ENCODE measurements at regions of chr4 and their contacts with region 1.

Region 1: DNA sequence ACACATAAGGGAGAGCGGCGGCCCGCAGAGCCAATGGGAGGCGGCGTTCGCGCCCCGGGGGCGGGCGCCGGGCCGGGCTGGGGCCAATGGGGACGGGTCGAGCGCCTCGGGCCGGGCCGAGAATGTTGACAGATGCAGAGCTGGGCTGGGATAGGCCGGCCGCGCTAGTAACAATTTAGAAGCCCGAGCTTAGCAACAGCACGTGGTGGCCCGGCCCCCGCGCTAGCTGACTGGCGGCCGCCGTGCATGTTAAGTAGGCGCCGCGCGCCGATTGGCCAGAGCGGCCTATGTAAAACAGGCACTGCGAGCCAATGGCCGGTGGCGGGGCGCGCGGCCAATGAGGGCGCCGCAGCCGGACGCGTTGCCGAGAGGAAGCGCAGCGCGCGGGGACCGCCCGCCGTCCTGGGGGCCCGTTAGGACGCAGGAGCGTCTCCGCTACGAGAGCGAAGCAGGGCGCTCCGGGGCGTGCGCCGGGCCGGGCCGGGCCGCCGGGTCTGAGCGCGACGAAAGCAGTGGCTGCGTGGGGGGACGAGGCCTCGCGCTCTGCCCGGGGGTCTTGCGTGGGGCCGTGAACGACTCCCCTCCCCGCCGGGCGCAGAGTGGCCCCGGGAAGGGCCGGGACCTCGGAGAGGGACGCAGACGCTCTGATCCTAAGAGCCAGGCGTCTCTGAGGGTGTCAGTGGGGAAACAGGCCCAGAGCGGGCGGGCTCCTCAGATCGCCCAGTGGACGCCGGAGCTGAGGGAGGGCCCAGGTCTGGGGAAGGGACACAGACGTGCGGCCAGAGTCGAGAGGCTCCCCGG is 434 bp upstream of the MXD4 start:
- DNase-seq: peak; percentile 98
- H3K4me3 Mint-ChIP-seq: peak overlapping the region; percentile 72
- H3K27ac Mint-ChIP-seq: peak overlapping the region; percentile 67
- H3K4me1 Mint-ChIP-seq: no peaks in the 10 kb centered on the region
- H3K27me3 Mint-ChIP-seq: no peaks in the 10 kb centered on the region

Region 2: DNA sequence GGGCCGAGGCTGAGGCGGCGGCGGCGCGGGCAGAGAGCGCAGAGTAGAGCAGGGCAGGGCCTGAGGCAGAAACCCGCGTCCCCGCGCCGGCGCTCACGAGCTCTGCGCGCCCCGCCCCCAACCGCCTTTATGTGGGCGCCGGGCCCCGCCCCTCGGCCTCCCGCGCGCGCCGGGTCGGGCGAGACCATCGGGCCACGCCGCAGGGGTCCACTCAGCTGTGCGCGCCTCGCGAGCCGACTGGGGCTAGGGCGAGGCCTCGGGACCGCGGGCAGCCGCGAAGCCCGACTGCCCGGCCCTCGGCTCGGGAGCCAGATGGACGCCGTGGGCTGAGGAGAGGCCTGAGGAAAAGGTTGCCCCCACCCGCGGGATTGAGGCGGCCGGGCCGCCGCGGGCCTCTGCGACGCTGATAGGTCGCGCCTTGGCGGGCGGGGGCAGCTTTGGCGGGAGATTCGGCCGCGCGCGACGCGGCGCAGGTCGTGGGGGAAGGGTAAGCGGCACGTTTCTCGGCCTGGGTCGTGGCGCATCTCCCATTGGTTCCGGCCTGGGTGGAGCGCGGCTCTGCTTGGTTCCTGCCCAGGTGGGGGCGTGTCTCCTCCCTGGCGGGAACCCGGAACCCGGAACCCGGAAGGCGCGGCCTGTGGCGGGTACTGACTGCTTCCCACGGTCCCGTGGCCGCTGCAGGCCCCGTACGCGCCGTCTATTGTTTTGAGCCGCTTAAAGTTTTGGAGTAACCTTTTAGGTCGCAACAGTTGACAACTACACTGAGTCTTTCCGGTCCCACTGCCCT is 549.9 kb before region 1 on chr4 and contains the start of gene SLBP:
- intact Hi-C with region 1: loop called (anchors 2 kb)
- DNase-seq: peak; percentile 99
- H3K4me3 Mint-ChIP-seq: peak within 1 kb of the TSS; percentile 99
- H3K27ac Mint-ChIP-seq: peak within 1 kb of the TSS; percentile 89
- H3K4me1 Mint-ChIP-seq: peaks cover 59% of the 10 kb centered on the region
- H3K27me3 Mint-ChIP-seq: no peaks in the 10 kb centered on the region
- total RNA-seq, gene SLBP: 136 and 140 TPM in 2 replicates

Region 3: DNA sequence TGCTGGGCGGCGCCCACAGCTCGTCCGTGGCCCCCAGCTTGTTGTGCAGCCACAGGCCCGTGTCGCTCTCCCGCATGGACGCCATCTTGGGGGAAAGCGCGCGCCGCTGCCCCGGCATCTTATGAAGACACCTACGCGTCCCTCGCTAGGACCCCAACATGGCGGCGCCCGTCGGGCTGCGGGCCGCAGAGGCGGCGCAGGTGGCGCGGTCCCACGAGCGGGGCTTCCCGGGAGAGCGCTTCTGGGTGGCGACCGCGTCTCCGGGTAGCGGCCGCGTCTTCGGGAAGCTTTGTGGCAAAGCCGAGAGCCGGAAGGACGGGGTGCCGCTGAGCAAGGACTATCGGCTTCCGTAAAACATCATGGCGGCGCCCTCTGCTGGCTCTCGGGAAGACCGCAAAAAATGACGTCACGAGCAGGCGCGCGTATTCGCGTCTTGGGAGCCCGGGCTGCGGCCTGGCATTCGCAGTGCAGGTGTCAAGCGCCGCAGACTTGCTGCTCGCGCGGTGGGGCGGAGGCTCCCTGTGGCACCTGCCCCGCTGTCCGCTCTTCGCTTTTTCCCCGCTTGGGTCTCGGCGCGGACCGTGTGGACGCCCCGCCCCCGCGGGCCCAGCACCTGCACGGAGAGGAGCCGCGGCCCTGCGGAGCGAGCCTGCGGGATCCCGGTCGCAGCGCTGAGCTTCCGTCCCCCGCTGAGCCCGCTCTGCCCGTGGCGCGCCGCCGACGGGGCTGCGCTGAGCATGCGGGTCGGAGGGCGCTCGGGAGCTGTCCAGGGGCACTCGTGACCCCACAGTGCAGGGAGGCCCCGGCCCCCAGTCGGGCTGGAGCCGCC is 253.3 kb before region 1 on chr4 and contains the start of gene NELFA:
- intact Hi-C with region 1: loop called (anchors 1 kb)
- DNase-seq: peak; percentile 91
- H3K4me3 Mint-ChIP-seq: peak within 1 kb of the TSS; percentile 92
- H3K27ac Mint-ChIP-seq: peak within 1 kb of the TSS; percentile 88
- H3K4me1 Mint-ChIP-seq: peaks cover 31% of the 10 kb centered on the region
- H3K27me3 Mint-ChIP-seq: peaks cover 18% of the 10 kb centered on the region
- total RNA-seq, gene NELFA: 52.9 and 55.4 TPM in 2 replicates

Region 4: GRCh38 chr4:2241410-2242353 is 20.7 kb before region 1 on chr4 and contains the starts of genes HAUS3 and POLN:
- intact Hi-C with region 1: loop called (anchors 1 kb)
- DNase-seq: peak; percentile 100
- H3K4me3 Mint-ChIP-seq: peak within 1 kb of the TSS; percentile 85
- H3K27ac Mint-ChIP-seq: peak within 1 kb of the TSS; percentile 90
- H3K4me1 Mint-ChIP-seq: peaks cover 53% of the 10 kb centered on the region
- H3K27me3 Mint-ChIP-seq: peaks cover 2% of the 10 kb centered on the region
- total RNA-seq, gene HAUS3: 19.2 and 19.9 TPM in 2 replicates
- total RNA-seq, gene POLN: 2.1 and 3.5 TPM in 2 replicates

Region 5: GRCh38 chr4:2418650-2419571 is 156.6 kb after region 1 on chr4 and contains the start of gene CFAP99:
- intact Hi-C with region 1: loop called (anchors 1 kb)
- DNase-seq: peak; percentile 94
- H3K4me3 Mint-ChIP-seq: peak within 1 kb of the TSS; percentile 85
- H3K27ac Mint-ChIP-seq: peak within 1 kb of the TSS; percentile 82
- H3K4me1 Mint-ChIP-seq: peaks cover 39% of the 10 kb centered on the region
- H3K27me3 Mint-ChIP-seq: peaks cover 55% of the 10 kb centered on the region
- total RNA-seq, gene CFAP99: not detected in 2 replicates

Region 6: GRCh38 chr4:2630556-2631273 is 368.4 kb after region 1 on chr4:
- intact Hi-C with region 1: no loop called
- DNase-seq: no peak
- H3K4me3 Mint-ChIP-seq: no peak overlapping the region
- H3K27ac Mint-ChIP-seq: no peak overlapping the region
- H3K4me1 Mint-ChIP-seq: no peaks in the 10 kb centered on the region
- H3K27me3 Mint-ChIP-seq: no peaks in the 10 kb centered on the region

Region 7: GRCh38 chr4:2963175-2963965 is 701.0 kb after region 1 on chr4 and contains the starts of genes GRK4 and NOP14:
- intact Hi-C with region 1: loop called (anchors 1 kb)
- DNase-seq: peak; percentile 96
- H3K4me3 Mint-ChIP-seq: peak within 1 kb of the TSS; percentile 97
- H3K27ac Mint-ChIP-seq: peak within 1 kb of the TSS; percentile 92
- H3K4me1 Mint-ChIP-seq: peaks cover 28% of the 10 kb centered on the region
- H3K27me3 Mint-ChIP-seq: no peaks in the 10 kb centered on the region
- total RNA-seq, gene GRK4: 4.4 and 4.5 TPM in 2 replicates
- total RNA-seq, gene NOP14: 140 and 142 TPM in 2 replicates